GM13977 (cell line): ENCODE measurements at regions of chr3 and their contacts with region 1.

Region 1: GRCh38 chr3:122092460-122093165 is 37.5 kb downstream of the CD86 start:
- DNase-seq: no peak
- CTCF ChIP-seq: peak; percentile 79

Region 2: GRCh38 chr3:121545574-121546455 is 546.8 kb before region 1 on chr3 and contains the start of gene POLQ:
- in situ Hi-C with region 1: loop called (anchors 10 kb)
- DNase-seq: peak; percentile 90
- CTCF ChIP-seq: no peak

Region 3: DNA sequence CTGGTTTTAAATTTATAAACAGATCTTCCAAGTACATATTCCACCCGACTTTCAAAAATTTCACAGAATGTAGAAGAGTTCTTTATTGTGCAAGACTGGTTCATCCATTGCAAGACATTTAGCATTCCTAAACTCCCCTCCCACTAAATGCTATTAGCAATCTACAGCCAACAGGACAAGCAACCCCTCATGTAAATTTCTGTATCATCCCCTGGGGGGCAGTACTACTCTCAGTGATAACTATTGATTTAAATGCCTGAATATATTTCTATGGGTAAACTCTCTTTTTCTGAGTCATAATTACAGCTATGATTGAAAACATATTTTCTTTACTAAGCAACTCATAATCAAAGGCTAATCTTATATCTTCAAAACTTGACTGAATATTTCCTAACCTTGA is 209.1 kb before region 1 on chr3:
- in situ Hi-C with region 1: loop called (anchors 25 kb)
- DNase-seq: peak; percentile 12
- CTCF ChIP-seq: peak; percentile 27

Region 4: GRCh38 chr3:121995161-121996137 is 97.2 kb before region 1 on chr3:
- in situ Hi-C with region 1: loop called (anchors 5 kb)
- DNase-seq: no peak
- CTCF ChIP-seq: peak; percentile 83